ENCODE measurements at regions of chr9 and their contacts with region 1.

Region 1: GRCh38 chr9:21777701-21778100 is 24.7 kb upstream of the MTAP start:
- DNase-seq: no peak
- H3K4me3 ChIP-seq: no peak overlapping the region
- H3K27ac ChIP-seq: no peak overlapping the region
- H3K4me1 ChIP-seq: no peaks in the 10 kb centered on the region
- H3K27me3 ChIP-seq: no peaks in the 10 kb centered on the region
- CTCF ChIP-seq: no peak
- POLR2A ChIP-seq: no peak

Region 2: DNA sequence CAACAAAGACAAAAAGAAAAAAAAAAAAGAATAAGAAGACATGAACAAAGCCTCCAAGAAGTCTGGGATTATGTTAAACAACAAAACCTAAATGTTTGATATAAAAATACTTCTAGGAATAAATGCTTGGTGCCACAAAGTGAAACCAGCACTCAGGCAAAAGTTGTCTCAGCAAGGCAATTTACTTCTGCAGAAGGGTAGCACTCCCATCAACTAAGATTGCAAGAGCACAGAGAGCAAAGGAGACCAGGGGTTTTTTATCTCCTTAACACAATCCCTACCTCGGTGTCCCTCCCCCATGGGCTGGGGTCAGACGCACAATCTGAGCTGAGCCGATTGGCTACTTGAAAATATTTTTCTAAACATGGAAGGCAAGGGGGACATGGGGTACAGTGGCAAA is 1607.6 kb before region 1 on chr9:
- intact Hi-C with region 1: loop called (anchors 5 kb)
- DNase-seq: no peak
- H3K4me3 ChIP-seq: no peak overlapping the region
- H3K27ac ChIP-seq: no peak overlapping the region
- H3K4me1 ChIP-seq: no peaks in the 10 kb centered on the region
- H3K27me3 ChIP-seq: no peaks in the 10 kb centered on the region
- CTCF ChIP-seq: no peak
- POLR2A ChIP-seq: no peak

Region 3: DNA sequence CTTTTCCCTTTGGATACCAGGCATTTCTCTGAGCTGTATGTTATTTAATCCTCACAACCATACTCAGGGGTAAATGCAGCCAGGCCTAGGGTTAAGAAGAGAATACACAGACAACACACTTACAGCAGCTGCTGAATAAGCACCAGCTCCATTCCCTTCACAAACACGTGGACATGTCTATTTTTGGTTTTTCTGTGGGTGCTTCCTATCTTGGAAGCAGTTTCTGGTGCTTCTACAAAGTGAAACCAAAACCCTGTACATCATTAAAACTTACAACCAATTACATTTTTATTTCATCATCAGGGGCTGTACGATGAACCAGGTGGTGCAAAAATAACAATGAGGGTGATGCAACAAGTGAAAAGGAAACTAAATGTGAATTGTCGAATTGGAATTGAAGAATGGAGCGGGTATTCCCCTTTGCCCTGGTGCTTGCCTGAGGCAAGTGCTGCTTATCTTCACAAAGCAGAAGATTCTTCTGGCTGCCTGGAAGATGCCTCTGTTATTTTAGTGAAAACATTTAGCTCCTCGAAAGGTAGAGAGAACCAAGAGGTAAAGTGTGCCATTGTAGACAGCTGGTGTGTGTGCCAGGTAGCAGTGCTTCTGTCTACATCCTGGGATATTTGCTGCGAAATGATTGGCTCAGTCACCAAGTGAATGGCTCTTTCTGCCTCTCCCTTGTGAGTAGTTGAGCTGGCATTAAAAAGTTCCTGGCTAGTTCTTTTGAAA is 681.4 kb before region 1 on chr9:
- intact Hi-C with region 1: no loop called
- DNase-seq: no peak
- H3K4me3 ChIP-seq: peak overlapping the region; percentile 17 to 24
- H3K27ac ChIP-seq: peak overlapping the region; percentile 54
- H3K4me1 ChIP-seq: peaks cover 14% of the 10 kb centered on the region
- H3K27me3 ChIP-seq: no peaks in the 10 kb centered on the region
- CTCF ChIP-seq: no peak
- POLR2A ChIP-seq: no peak

Region 4: DNA sequence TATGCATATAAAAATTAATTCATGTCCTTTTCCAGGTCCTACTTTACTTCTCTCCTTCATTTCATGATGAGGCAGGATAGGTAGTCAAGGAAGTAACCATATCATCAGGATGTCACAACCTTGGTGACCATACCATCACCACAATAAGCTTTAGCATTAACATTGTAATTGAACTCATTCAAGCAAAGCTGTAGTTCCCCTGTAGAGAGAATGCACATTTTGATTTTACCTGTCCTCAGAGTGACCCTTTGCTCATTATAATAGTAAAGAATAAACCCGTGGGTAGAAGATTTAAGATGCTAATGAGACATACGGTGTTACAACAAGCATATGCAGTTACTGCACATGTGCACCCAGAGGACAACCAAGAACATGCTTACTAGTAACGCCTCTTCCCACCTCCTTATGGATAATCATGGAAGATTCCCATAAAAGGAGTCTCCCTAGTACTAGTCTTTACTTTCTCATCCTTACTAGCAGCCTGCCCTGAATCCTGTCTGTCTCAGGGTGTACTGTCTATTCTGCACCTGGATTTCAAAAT is 429.2 kb before region 1 on chr9:
- intact Hi-C with region 1: no loop called
- DNase-seq: no peak
- H3K4me3 ChIP-seq: no peak overlapping the region
- H3K27ac ChIP-seq: no peak overlapping the region
- H3K4me1 ChIP-seq: no peaks in the 10 kb centered on the region
- H3K27me3 ChIP-seq: no peaks in the 10 kb centered on the region
- CTCF ChIP-seq: no peak
- POLR2A ChIP-seq: no peak

Measured in vagina (tissue), 2 donors.